A549 (cell line): ENCODE measurements at regions of chr10 and their contacts with region 1.

Region 1: GRCh38 chr10:128211953-128212727 is 85.9 kb upstream of the MKI67 start:
- DNase-seq: peak; percentile 79 to 94
- ATAC-seq: peak; percentile 74 to 90
- H3K4me3 ChIP-seq: peak overlapping the region; percentile 18; the same call in 1 of the 3 replicates
- H3K27ac ChIP-seq: no peak overlapping the region
- H3K4me1 ChIP-seq: no peaks in the 10 kb centered on the region
- CTCF ChIP-seq: peak; percentile 86
- EP300 ChIP-seq: no peak
- POLR2A ChIP-seq: no peak
- RAD21 ChIP-seq: peak; percentile 35 to 57; a peak in 4 of 5 replicates

Region 2: GRCh38 chr10:128178319-128178958 is 33.7 kb before region 1 on chr10:
- CTCF ChIA-PET with region 1: interaction called, 18 read pairs
- POLR2A ChIA-PET with region 1: interaction called, 4 read pairs
- DNase-seq: peak; percentile 61 to 68
- ATAC-seq: peak; percentile 95 to 98
- H3K4me3 ChIP-seq: no peak overlapping the region
- H3K27ac ChIP-seq: no peak overlapping the region
- H3K4me1 ChIP-seq: peaks cover 23% of the 10 kb centered on the region
- CTCF ChIP-seq: peak; percentile 60
- EP300 ChIP-seq: no peak
- POLR2A ChIP-seq: no peak
- RAD21 ChIP-seq: peak; percentile 32 to 39; a peak in 3 of 5 replicates

Region 3: GRCh38 chr10:128186959-128187787 is 25.0 kb before region 1 on chr10:
- CTCF ChIA-PET with region 1: interaction called, 16 read pairs
- POLR2A ChIA-PET with region 1: no interaction called
- DNase-seq: no peak
- ATAC-seq: no peak
- H3K4me3 ChIP-seq: no peak overlapping the region
- H3K27ac ChIP-seq: no peak overlapping the region
- H3K4me1 ChIP-seq: peaks cover 7% of the 10 kb centered on the region
- CTCF ChIP-seq: no peak
- EP300 ChIP-seq: no peak
- POLR2A ChIP-seq: no peak
- RAD21 ChIP-seq: no peak

Region 4: GRCh38 chr10:128242641-128243040 is 30.5 kb after region 1 on chr10:
- CTCF ChIA-PET with region 1: interaction called, 11 read pairs
- POLR2A ChIA-PET with region 1: no interaction called
- DNase-seq: peak in 1 of 2 experiments; percentile 11
- ATAC-seq: peak in 1 of 2 experiments; percentile 69; a peak in 3 of 6 replicates
- H3K4me3 ChIP-seq: no peak overlapping the region
- H3K27ac ChIP-seq: no peak overlapping the region
- H3K4me1 ChIP-seq: no peaks in the 10 kb centered on the region
- CTCF ChIP-seq: no peak
- EP300 ChIP-seq: no peak
- POLR2A ChIP-seq: no peak
- RAD21 ChIP-seq: no peak

Region 5: DNA sequence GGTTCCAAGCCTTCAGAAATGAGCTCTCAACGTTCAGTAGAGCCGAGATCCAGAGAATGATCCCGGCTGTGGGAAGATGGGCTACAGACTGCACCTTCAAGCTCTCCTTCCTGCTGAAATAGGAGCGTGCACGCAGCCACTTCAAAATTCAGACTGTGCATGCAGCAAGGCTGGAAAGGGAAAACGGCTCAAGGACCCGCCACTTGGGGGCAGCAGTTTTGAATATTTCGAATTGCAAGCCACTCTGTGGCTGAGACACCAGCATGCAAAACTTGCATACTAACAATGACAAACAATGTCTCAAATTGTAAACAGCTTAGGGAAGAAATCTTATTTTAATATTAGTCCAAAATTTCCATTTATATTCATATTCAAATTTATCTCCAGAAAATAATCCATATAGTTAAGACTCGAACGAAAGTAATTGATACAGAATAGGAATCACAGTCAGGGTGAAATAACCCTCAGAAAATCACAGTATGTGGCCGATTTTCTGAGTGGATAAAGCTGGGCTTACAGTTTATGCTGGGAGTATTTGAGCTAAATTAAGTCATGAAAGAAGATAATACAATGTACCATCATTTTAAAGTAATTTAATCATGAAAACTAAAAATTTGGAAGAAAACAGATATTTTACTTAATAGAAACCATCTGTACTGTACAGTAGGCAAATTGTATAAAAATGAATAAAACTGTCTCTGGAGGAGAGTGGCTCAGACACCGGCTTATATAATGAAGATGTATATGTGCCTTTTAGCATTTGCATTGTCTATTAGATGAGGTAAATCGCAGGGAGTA is 52.0 kb after region 1 on chr10:
- CTCF ChIA-PET with region 1: interaction called, 13 read pairs
- POLR2A ChIA-PET with region 1: no interaction called
- DNase-seq: peak; percentile 33 to 64
- ATAC-seq: peak; percentile 86 to 92
- H3K4me3 ChIP-seq: no peak overlapping the region
- H3K27ac ChIP-seq: no peak overlapping the region
- H3K4me1 ChIP-seq: no peaks in the 10 kb centered on the region
- CTCF ChIP-seq: peak; percentile 68
- EP300 ChIP-seq: no peak
- POLR2A ChIP-seq: no peak
- RAD21 ChIP-seq: peak; percentile 43 to 56

Region 6: GRCh38 chr10:128280271-128280670 is 68.1 kb after region 1 on chr10:
- CTCF ChIA-PET with region 1: no interaction called
- POLR2A ChIA-PET with region 1: no interaction called
- DNase-seq: no peak
- ATAC-seq: peak in 1 of 2 experiments; percentile 57; a peak in 1 of 6 replicates
- H3K4me3 ChIP-seq: no peak overlapping the region
- H3K27ac ChIP-seq: no peak overlapping the region
- H3K4me1 ChIP-seq: no peaks in the 10 kb centered on the region
- CTCF ChIP-seq: no peak
- EP300 ChIP-seq: no peak
- POLR2A ChIP-seq: no peak
- RAD21 ChIP-seq: no peak

Region 7: DNA sequence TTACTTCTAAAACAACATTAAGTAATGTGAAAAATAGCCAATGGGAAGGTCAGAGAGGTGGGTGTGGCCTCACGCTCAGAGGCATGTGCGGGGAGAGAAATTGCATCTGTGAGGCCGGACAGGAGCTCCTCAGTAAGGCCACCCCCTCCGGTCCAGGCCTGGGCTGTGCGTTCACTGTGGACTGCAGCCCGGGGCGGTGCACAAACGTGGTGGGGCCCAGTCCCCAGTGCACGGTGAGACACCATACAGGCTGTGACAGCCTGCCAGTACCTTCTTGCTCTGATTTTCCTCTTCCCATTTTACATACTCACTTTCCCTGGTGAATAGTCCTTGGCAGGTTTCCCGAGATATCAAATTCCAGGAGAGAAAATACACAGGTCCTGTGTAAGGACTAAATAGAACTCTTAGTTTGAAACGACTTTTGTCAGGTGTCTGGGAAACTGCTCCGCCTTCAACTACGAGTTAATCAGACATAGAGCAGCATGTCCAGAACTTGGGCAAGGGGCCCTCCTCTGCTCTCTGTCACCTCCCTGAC is 88.2 kb after region 1 on chr10:
- CTCF ChIA-PET with region 1: no interaction called
- POLR2A ChIA-PET with region 1: no interaction called
- DNase-seq: no peak
- ATAC-seq: no peak
- H3K4me3 ChIP-seq: no peak overlapping the region
- H3K27ac ChIP-seq: no peak overlapping the region
- H3K4me1 ChIP-seq: no peaks in the 10 kb centered on the region
- CTCF ChIP-seq: no peak
- EP300 ChIP-seq: no peak
- POLR2A ChIP-seq: no peak
- RAD21 ChIP-seq: no peak

Region 8: DNA sequence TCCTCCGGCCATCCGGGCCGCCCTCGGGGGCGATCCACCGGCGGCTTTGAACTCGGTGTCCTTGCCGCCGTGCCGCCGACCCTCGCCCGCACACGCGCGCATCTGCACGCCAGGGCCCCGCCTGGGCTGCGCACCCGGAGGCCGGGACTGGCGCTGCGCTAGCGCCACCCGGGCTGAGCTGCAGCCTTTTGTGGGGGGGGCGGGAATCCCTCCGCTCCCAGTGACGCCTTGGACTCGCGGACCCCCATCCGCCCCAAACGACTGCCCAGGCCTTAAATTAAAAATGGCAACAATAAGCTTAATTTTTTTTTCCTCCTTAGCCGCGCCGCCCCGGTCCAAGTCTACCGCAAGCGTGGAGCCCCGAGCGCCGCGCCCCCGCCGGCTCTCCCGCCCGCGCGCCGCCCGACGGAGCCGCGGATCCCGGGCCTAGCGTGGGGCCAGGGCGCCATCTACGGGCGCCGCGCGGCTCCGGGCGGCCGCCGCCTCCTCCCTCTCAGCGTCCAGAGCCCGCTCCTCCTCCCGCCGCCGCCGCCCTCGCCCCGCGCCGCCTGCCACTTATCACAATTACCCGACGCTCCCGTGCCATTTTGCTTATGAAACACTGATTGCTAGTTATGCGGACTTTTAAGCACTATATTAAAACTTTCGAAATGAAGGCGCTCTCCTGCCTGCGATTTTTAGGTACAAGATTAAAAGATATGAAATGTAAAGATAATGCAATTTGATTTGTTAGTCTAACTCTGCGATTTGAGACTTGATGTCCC is 1759.4 kb after region 1 on chr10:
- CTCF ChIA-PET with region 1: interaction called, 11 read pairs
- POLR2A ChIA-PET with region 1: no interaction called
- DNase-seq: peak; percentile 63
- ATAC-seq: peak; percentile 89 to 93
- H3K4me3 ChIP-seq: peak overlapping the region; percentile 50
- H3K27ac ChIP-seq: peak overlapping the region in 1 of 2 experiments; percentile 68; a peak in 3 of 6 replicates
- H3K4me1 ChIP-seq: peaks cover 6% of the 10 kb centered on the region; the same call in 1 of the 3 replicates
- CTCF ChIP-seq: peak; percentile 92
- EP300 ChIP-seq: no peak
- POLR2A ChIP-seq: no peak
- RAD21 ChIP-seq: peak; percentile 58 to 94